ENCODE measurements at regions of chr1 and their contacts with region 1.

Region 1: GRCh38 chr1:212782422-212783154 is 9.0 kb downstream of the NSL1 start:
- DNase-seq: no peak
- ATAC-seq: peak; percentile 55

Region 2: GRCh38 chr1:212671342-212672031 is 111.1 kb before region 1 on chr1:
- intact Hi-C with region 1: loop called (anchors 10 kb)
- DNase-seq: peak; percentile 71
- ATAC-seq: peak; percentile 23

Measured in Right ventricle myocardium superior (tissue), 1 donor.